MCF 10A (cell line): ENCODE measurements at regions of chr20 and their contacts with region 1.

Region 1: GRCh38 chr20:31951530-31952453 is at the start of gene PDRG1:
- DNase-seq: peak; percentile 97
- H3K4me3 Mint-ChIP-seq: peak within 1 kb of the TSS; percentile 81
- H3K27ac Mint-ChIP-seq: peak within 1 kb of the TSS; percentile 91
- H3K4me1 Mint-ChIP-seq: peaks cover 13% of the 10 kb centered on the region
- H3K27me3 Mint-ChIP-seq: peaks cover 29% of the 10 kb centered on the region
- CTCF ChIP-seq: peak; percentile 71
- total RNA-seq, gene PDRG1: 12.2 and 16.3 TPM in 2 replicates

Region 2: GRCh38 chr20:31861346-31862156 is 90.2 kb before region 1 on chr20:
- CTCF ChIA-PET with region 1: interaction called, 200 read pairs
- POLR2A ChIA-PET with region 1: no interaction called
- intact Hi-C with region 1: no loop called
- DNase-seq: no peak
- H3K4me3 Mint-ChIP-seq: peak overlapping the region; percentile 54
- H3K27ac Mint-ChIP-seq: no peak overlapping the region
- H3K4me1 Mint-ChIP-seq: peaks cover 5% of the 10 kb centered on the region
- H3K27me3 Mint-ChIP-seq: peaks cover 40% of the 10 kb centered on the region
- CTCF ChIP-seq: no peak

Region 3: DNA sequence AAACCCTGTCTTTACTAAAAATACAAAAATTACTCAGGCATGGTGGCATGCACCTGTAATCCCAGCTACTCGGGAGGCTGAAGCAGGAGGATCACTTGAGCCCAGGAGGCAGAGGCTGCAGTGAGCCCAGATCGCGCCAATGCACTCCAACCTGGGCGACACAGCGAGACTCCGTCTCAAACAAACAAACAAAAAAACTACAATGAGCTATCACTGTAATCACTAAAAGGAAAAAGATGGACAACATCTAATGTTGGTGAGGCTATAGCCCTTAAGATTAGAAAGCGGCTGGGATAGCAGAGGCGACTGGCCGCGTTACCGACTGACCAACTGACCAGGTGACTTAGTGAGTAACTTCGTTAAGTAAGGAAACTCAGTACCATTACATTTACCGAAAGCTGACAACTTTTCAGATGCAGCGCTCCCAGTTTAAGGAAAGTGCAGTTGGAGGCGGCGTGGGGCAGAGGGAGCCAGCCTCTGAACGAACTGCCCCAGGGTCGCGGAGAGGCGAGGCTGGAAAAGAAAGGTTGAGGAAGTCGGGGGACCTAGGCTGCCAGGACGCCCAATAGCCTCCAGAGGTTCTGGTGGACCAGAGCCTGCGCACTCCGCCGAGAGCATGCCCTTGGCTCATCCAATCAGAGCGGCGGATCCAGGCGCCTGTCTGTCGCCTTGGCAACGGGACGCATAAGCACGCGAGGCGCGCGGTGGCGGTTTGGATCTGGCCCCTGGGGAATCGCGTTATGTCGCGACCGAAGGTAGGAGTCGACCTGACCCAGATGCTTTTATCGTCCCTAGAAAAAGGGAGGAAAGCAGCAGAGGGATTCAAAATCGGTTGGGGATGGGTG is 72.4 kb before region 1 on chr20:
- CTCF ChIA-PET with region 1: interaction called, 16 read pairs
- POLR2A ChIA-PET with region 1: interaction called, 17 read pairs
- intact Hi-C with region 1: no loop called
- DNase-seq: peak; percentile 92
- H3K4me3 Mint-ChIP-seq: peak overlapping the region; percentile 98
- H3K27ac Mint-ChIP-seq: peak overlapping the region; percentile 98
- H3K4me1 Mint-ChIP-seq: no peaks in the 10 kb centered on the region
- H3K27me3 Mint-ChIP-seq: peaks cover 12% of the 10 kb centered on the region
- CTCF ChIP-seq: no peak

Region 4: GRCh38 chr20:31936420-31936819 is 15.4 kb before region 1 on chr20:
- CTCF ChIA-PET with region 1: interaction called, 17 read pairs
- POLR2A ChIA-PET with region 1: interaction called, 11 read pairs
- intact Hi-C with region 1: no loop called
- DNase-seq: no peak
- H3K4me3 Mint-ChIP-seq: no peak overlapping the region
- H3K27ac Mint-ChIP-seq: no peak overlapping the region
- H3K4me1 Mint-ChIP-seq: no peaks in the 10 kb centered on the region
- H3K27me3 Mint-ChIP-seq: peaks cover 4% of the 10 kb centered on the region
- CTCF ChIP-seq: no peak

Region 5: GRCh38 chr20:31968291-31969126 is 16.7 kb after region 1 on chr20:
- CTCF ChIA-PET with region 1: interaction called, 44 read pairs
- POLR2A ChIA-PET with region 1: interaction called, 4 read pairs
- intact Hi-C with region 1: no loop called
- DNase-seq: peak; percentile 51
- H3K4me3 Mint-ChIP-seq: no peak overlapping the region
- H3K27ac Mint-ChIP-seq: no peak overlapping the region
- H3K4me1 Mint-ChIP-seq: no peaks in the 10 kb centered on the region
- H3K27me3 Mint-ChIP-seq: peaks cover 95% of the 10 kb centered on the region
- CTCF ChIP-seq: no peak